Activated CD4-positive, alpha-beta T cell treated with anti-CD3 and anti-CD28 coated beads for 36 hours (primary cell): ENCODE measurements at regions of chr1 and their contacts with region 1.

Region 1: DNA sequence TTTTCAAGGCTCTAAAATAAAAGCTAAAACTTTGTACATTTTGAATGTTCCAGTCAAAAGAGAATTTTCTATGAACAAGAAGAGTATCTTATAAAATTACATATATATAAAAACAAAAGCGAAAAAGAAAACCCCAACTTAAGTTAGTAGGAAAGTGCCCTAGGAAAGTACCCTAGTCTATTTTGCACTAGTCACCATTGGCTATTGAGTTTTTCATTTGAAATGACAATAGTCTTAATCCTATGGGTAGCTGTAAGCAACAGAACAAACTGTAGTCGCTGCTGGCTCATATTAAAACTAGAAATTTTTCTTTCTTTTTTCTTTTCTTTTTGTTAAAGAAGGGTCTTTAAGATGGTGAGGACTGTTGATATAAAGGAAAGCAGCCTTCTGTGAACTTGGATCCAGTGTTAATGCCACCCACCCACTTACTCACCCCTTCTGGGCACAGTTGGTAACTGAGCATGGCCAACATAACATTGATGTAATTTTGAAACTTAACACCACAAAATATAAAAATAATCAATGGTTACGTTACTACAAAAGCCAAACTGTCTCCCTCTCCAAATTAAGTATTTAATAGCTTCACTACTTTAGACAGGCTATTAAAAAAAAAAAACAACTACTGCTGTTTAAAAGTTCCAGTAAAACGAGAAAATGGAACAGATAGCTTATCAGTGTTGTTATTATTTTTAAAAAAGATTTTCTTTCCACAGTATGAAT is 177.0 kb downstream of the EIF4G3 start:
- DNase-seq: no peak
- ATAC-seq: peak; percentile 33
- H3K4me3 Mint-ChIP-seq: no peak overlapping the region
- H3K27ac Mint-ChIP-seq: no peak overlapping the region
- H3K4me1 Mint-ChIP-seq: peaks cover 9% of the 10 kb centered on the region
- H3K27me3 Mint-ChIP-seq: no peaks in the 10 kb centered on the region

Region 2: DNA sequence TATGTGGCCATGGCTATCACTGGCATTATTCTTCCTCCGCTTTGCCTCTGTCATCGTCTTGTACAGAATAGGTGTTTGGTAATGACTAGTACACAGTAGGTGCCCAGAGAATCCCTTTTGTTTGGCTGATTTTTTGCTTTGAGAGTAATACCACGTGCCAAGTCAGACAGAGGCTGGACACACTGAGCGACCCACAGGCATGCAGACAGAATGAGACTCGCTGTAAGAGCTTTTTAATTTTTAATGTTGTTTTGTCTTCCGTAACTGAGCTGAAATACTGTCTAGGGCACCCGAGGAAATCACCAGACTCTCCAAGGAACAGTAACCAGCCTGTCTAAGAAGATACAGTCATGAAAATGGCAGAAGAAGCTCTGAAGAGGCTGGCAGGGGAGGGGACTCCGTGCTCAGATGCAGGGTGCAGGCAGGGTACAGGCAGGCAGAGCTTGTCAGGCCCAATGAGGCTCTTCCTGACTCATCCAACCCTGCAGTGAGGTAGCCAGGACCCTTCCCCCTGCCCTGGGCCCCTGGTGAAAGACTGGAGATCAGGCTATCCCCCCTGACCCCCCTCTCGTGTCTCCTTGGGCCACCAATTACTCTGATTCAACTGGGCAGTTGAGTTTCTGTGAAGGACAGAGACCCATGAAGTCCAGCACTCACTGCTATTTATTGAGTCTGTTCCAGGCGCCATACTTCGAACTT is 350.7 kb after region 1 on chr1:
- CTCF ChIA-PET with region 1: no interaction called
- POLR2A ChIA-PET with region 1: no interaction called
- intact Hi-C with region 1: loop called in 1 of 2 experiments (anchors 5 kb)
- DNase-seq: no peak
- ATAC-seq: no peak
- H3K4me3 Mint-ChIP-seq: no peak overlapping the region
- H3K27ac Mint-ChIP-seq: no peak overlapping the region
- H3K4me1 Mint-ChIP-seq: no peaks in the 10 kb centered on the region
- H3K27me3 Mint-ChIP-seq: no peaks in the 10 kb centered on the region